ENCODE measurements at regions of chr17 and their contacts with region 1.

Region 1: DNA sequence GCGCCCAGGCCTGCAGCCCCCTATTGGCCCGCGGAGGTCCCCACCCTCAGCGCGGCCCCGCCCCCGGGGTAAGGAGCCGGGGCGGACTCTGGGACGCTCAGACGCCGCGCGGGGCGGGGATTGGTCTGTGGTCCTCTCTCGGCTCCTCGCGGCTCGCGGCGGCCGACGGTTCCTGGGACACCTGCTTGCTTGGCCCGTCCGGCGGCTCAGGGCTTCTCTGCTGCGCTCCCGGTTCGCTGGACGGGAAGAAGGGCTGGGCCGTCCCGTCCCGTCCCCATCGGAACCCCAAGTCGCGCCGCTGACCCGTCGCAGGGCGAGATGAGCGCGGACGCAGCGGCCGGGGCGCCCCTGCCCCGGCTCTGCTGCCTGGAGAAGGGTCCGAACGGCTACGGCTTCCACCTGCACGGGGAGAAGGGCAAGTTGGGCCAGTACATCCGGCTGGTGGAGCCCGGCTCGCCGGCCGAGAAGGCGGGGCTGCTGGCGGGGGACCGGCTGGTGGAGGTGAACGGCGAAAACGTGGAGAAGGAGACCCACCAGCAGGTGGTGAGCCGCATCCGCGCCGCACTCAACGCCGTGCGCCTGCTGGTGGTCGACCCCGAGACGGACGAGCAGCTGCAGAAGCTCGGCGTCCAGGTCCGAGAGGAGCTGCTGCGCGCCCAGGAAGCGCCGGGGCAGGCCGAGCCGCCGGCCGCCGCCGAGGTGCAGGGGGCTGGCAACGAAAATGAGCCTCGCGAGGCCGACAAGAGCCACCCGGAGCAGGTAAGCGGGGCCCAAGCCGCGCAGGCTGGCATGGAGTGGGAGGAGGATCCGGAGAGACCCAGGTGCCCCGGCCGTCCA is at the start of gene NHERF1:
- DNase-seq: peak; percentile 99
- H3K4me3 ChIP-seq: peak within 1 kb of the TSS; percentile 86
- H3K27ac ChIP-seq: peak within 1 kb of the TSS; percentile 69
- H3K4me1 ChIP-seq: peaks cover 36% of the 10 kb centered on the region
- CTCF ChIP-seq: peak; percentile 70
- total RNA-seq, gene NHERF1: 73.2 and 86.1 TPM in 2 replicates

Region 2: GRCh38 chr17:74759243-74759801 is 10.6 kb after region 1 on chr17:
- CTCF ChIA-PET with region 1: interaction called, 10 read pairs
- POLR2A ChIA-PET with region 1: interaction called, 5 read pairs
- intact Hi-C with region 1: loop called (anchors 1 kb)
- DNase-seq: peak; percentile 74
- H3K4me3 ChIP-seq: no peak overlapping the region
- H3K27ac ChIP-seq: no peak overlapping the region
- H3K4me1 ChIP-seq: peaks cover 19% of the 10 kb centered on the region
- CTCF ChIP-seq: peak; percentile 59

Region 3: GRCh38 chr17:74770498-74771318 is 22.0 kb after region 1 on chr17:
- CTCF ChIA-PET with region 1: interaction called, 10 read pairs
- POLR2A ChIA-PET with region 1: interaction called, 13 read pairs
- intact Hi-C with region 1: loop called (anchors 1 kb)
- DNase-seq: peak; percentile 66
- H3K4me3 ChIP-seq: no peak overlapping the region
- H3K27ac ChIP-seq: no peak overlapping the region
- H3K4me1 ChIP-seq: peaks cover 6% of the 10 kb centered on the region
- CTCF ChIP-seq: peak; percentile 86

Region 4: GRCh38 chr17:74776044-74776977 is 27.6 kb after region 1 on chr17 and contains the start of gene NAT9:
- CTCF ChIA-PET with region 1: interaction called, 10 read pairs
- POLR2A ChIA-PET with region 1: interaction called, 13 read pairs
- intact Hi-C with region 1: loop called (anchors 1 kb)
- DNase-seq: peak; percentile 100
- H3K4me3 ChIP-seq: peak within 1 kb of the TSS; percentile 75
- H3K27ac ChIP-seq: peak within 1 kb of the TSS; percentile 32
- H3K4me1 ChIP-seq: peaks cover 26% of the 10 kb centered on the region
- CTCF ChIP-seq: no peak
- total RNA-seq, gene NAT9: 77.2 and 99.3 TPM in 2 replicates

Region 5: DNA sequence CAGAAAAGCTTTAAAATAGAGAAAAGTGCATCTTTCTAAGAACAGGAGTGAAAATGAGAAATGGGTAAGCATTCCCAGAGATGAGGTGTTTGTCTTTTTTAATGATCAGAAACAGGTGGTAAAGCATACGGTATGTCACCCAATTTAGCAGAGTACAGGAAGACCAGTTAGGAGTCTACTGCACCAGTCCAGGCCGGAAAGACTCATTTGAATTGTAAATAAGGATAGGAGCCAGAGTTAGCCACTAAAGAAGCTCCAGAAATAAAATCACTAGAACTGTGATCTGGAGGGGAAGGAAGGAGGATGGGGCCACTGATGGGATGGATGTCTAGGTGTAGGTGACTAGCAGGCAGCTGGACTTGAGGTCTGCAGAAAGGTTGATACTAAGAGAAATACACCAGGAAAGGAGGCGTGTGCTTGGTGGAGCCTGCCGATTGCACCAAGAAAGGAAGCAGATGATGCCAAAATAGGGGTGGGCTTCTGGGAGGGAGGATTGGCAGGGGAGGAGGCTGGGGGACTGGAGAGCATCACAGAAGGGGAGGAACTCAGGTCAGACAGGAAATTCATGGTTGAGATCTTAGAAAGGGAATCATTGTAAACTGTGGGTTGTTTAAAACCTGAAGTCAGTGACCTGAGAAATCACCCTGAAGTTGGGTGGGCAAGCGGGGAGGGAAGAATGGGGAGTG is 35.5 kb after region 1 on chr17:
- CTCF ChIA-PET with region 1: no interaction called
- POLR2A ChIA-PET with region 1: interaction called, 11 read pairs
- intact Hi-C with region 1: loop called (anchors 1 kb)
- DNase-seq: peak; percentile 58
- H3K4me3 ChIP-seq: peak overlapping the region; percentile 33
- H3K27ac ChIP-seq: peak overlapping the region; percentile 30
- H3K4me1 ChIP-seq: peaks cover 44% of the 10 kb centered on the region
- CTCF ChIP-seq: no peak

Region 6: GRCh38 chr17:74790161-74791054 is 41.7 kb after region 1 on chr17:
- CTCF ChIA-PET with region 1: interaction called, 11 read pairs
- POLR2A ChIA-PET with region 1: no interaction called
- intact Hi-C with region 1: no loop called
- DNase-seq: no peak
- H3K4me3 ChIP-seq: no peak overlapping the region
- H3K27ac ChIP-seq: no peak overlapping the region
- H3K4me1 ChIP-seq: peaks cover 14% of the 10 kb centered on the region
- CTCF ChIP-seq: no peak

Region 7: DNA sequence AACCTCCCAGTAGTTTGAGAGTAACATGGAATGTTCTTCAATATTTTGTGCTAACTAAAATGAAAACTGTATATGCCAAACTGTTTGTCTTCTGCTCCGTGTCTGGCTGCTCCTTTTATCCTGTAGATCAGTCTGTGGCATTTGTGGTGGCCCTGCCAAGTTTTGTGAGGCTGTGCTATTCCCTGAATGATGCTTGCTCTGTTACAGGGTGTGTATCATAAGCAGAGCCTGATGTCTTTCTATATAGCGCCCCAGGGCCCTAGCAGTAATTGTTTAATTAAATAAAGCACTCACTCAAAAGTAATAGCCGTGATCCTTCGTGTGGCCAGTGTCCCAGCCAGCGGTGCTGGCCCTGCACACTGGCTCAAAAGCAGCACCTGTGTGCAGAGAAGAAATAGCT is 55.2 kb after region 1 on chr17:
- CTCF ChIA-PET with region 1: no interaction called
- POLR2A ChIA-PET with region 1: no interaction called
- intact Hi-C with region 1: no loop called
- DNase-seq: no peak
- H3K4me3 ChIP-seq: no peak overlapping the region
- H3K27ac ChIP-seq: no peak overlapping the region
- H3K4me1 ChIP-seq: no peaks in the 10 kb centered on the region
- CTCF ChIP-seq: no peak

Region 8: GRCh38 chr17:74864866-74865395 is 116.2 kb after region 1 on chr17:
- CTCF ChIA-PET with region 1: no interaction called
- POLR2A ChIA-PET with region 1: no interaction called
- intact Hi-C with region 1: loop called (anchors 2 kb)
- DNase-seq: peak; percentile 79
- H3K4me3 ChIP-seq: no peak overlapping the region
- H3K27ac ChIP-seq: no peak overlapping the region
- H3K4me1 ChIP-seq: peaks cover 18% of the 10 kb centered on the region
- CTCF ChIP-seq: peak; percentile 100